Activated naive CD4-positive, alpha-beta T cell treated with anti-CD3 and anti-CD28 coated beads, Interleukin-2, amount 10 ng/mL, durations not matched to agents 7 days and 5 days (primary cell): ENCODE measurements at regions of chrX and their contacts with region 1.

Region 1: GRCh38 chrX:153649178-153649914 is 2.3 kb downstream of the DUSP9 start:
- DNase-seq: peak; percentile 48
- H3K4me3 Mint-ChIP-seq: no peak overlapping the region
- H3K27ac Mint-ChIP-seq: no peak overlapping the region
- H3K4me1 Mint-ChIP-seq: peaks cover 2% of the 10 kb centered on the region
- H3K27me3 Mint-ChIP-seq: peaks cover 71% of the 10 kb centered on the region

Region 2: DNA sequence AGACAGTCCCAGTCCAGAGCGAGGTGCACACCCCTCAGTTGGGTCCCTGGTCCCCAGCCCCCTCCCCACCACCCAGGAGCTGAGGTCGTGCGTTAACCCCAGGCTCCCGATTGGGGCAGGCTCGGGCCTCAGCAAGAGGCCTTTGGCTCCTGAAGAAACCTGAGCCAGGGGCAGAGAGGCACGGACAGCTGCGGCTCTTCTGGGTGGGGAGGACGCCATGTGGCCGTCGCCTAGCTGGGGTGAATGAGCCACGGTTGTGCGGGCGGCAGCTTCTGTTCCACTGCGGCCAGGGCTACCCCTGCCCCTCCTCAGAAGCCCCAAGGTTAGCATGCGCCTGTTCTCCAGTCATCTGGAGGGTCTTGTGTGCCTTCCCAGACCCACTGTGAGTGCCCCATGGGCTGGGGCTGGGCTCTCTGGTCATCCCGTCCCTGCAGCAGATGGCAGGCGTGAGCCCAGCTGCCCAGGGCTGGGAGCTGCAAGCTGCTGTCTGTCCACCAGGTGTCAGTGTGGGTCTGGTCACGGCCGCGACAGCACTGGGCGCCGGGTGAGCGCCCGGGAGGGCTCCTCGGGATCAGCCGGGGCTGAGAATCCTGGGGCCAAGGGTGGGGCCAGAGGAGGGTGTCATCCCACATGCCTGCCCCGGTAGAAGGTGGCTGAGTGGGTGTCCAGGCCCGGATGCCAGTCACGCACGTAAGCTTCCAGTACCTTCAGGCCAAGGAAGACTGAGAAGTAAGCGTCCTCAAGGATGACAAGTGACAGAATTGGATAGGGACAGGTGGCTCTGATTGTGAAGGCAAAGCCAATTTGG is 110.0 kb before region 1 on chrX:
- CTCF ChIA-PET with region 1: interaction called, 14 read pairs
- DNase-seq: peak; percentile 68
- H3K4me3 Mint-ChIP-seq: no peak overlapping the region
- H3K27ac Mint-ChIP-seq: no peak overlapping the region
- H3K4me1 Mint-ChIP-seq: no peaks in the 10 kb centered on the region
- H3K27me3 Mint-ChIP-seq: peaks cover 10% of the 10 kb centered on the region

Region 3: DNA sequence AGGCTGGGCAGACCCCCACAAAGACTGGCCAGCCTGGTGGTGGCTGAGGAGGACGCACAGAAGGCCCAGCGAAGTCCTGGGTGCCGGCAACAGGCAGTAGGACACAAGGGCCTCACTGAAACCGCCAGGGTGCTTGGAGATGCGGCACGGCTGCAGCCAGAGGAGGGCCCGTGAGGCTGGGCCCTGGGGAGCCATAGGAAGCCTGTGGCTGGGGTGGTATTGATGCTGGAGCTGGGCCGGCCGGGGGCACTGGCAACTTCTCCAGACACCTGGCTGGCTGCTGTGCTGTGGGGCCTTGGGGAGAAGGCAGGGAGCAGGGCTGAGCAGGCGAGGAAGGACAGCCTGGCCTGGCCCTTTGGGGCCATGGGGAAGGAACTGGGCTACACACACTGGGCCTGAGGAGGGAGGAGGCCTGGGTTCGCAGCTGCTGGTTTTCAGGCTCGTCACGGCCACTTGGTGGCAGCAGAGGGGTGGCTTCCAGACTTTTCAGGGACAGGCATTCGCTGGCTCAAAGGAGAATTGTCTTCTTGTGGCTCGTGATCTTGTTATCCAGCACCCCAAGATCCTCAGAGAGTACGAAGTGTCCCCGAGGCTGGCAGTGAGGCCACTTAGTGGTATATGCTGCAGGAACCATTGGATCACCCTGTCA is 94.7 kb before region 1 on chrX:
- CTCF ChIA-PET with region 1: interaction called, 16 read pairs
- DNase-seq: peak; percentile 73
- H3K4me3 Mint-ChIP-seq: no peak overlapping the region
- H3K27ac Mint-ChIP-seq: no peak overlapping the region
- H3K4me1 Mint-ChIP-seq: no peaks in the 10 kb centered on the region
- H3K27me3 Mint-ChIP-seq: peaks cover 23% of the 10 kb centered on the region

Region 4: GRCh38 chrX:153609917-153610428 is 39.4 kb before region 1 on chrX:
- CTCF ChIA-PET with region 1: interaction called, 11 read pairs
- DNase-seq: peak; percentile 80
- H3K4me3 Mint-ChIP-seq: peak overlapping the region; percentile 69
- H3K27ac Mint-ChIP-seq: no peak overlapping the region
- H3K4me1 Mint-ChIP-seq: peaks cover 15% of the 10 kb centered on the region
- H3K27me3 Mint-ChIP-seq: peaks cover 62% of the 10 kb centered on the region

Region 5: DNA sequence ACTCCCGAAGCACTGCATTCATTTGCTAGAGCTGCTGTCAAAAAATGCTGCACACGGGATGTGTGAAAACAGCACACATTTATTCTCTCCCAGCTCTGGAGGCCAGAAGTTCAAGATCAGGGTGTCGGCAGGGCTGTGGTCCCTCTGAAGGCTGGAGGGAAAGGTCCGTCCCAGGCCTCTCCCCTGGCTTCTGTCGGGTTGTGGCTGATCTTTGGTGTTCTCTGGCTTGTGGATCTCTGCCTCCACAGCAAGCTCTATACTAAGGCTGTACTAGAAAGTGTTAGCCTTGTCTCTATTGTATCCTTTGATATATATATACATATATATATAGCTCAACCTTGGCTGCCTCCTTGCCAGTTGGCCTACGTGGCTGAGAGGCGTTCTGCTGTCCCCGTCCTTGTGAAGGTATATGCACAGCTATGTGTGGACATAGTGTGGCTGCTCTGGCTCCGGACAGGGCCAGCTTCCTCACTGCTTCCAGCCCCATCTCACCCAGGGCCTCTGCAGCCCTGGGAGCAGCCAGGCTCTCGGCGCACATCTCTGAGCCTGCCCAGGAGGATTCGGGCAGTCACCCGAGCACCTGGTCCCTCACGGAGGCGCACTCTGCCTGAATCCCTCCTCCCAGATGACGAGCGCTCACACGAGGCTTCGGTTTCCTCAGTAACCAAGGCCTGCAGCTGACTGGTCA is 17.3 kb before region 1 on chrX:
- CTCF ChIA-PET with region 1: interaction called, 14 read pairs
- DNase-seq: no peak
- H3K4me3 Mint-ChIP-seq: no peak overlapping the region
- H3K27ac Mint-ChIP-seq: no peak overlapping the region
- H3K4me1 Mint-ChIP-seq: no peaks in the 10 kb centered on the region
- H3K27me3 Mint-ChIP-seq: peaks cover 20% of the 10 kb centered on the region

Region 6: DNA sequence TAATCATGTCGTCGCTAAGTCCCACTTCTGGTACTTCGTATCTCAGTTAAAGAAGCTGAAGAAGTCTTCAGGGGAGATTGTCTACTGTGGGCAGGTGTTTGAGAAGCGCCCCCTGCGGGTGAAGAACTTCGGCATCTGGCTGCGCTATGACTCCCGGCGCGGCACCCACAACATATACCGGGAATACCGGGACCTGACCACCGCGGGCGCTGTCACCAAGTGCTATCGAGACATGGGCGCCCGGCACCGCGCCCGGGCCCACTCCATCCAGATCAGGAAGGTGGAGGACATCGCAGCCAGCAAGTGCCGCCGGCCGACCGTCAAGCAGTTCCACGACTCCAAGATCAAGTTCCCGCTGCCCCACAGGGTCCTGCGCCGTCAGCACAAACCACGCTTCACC is 12.9 kb after region 1 on chrX:
- CTCF ChIA-PET with region 1: interaction called, 13 read pairs
- DNase-seq: peak; percentile 69
- H3K4me3 Mint-ChIP-seq: no peak overlapping the region
- H3K27ac Mint-ChIP-seq: no peak overlapping the region
- H3K4me1 Mint-ChIP-seq: peaks cover 5% of the 10 kb centered on the region
- H3K27me3 Mint-ChIP-seq: peaks cover 64% of the 10 kb centered on the region

Region 7: GRCh38 chrX:153687121-153688039 is 38.0 kb after region 1 on chrX and contains the start of gene SLC6A8:
- CTCF ChIA-PET with region 1: no interaction called
- DNase-seq: peak; percentile 57
- H3K4me3 Mint-ChIP-seq: peak within 1 kb of the TSS; percentile 77
- H3K27ac Mint-ChIP-seq: no peak within 1 kb of the TSS
- H3K4me1 Mint-ChIP-seq: peaks cover 2% of the 10 kb centered on the region
- H3K27me3 Mint-ChIP-seq: peaks cover 68% of the 10 kb centered on the region

Region 8: GRCh38 chrX:153763989-153764755 is 114.8 kb after region 1 on chrX and contains the start of gene PLXNB3:
- CTCF ChIA-PET with region 1: no interaction called
- DNase-seq: peak; percentile 80
- H3K4me3 Mint-ChIP-seq: no peak within 1 kb of the TSS
- H3K27ac Mint-ChIP-seq: no peak within 1 kb of the TSS
- H3K4me1 Mint-ChIP-seq: peaks cover 9% of the 10 kb centered on the region
- H3K27me3 Mint-ChIP-seq: peaks cover 14% of the 10 kb centered on the region